Naive thymus-derived CD4-positive, alpha-beta T cell (primary cell): ENCODE measurements at regions of chr6 and their contacts with region 1.

Region 1: DNA sequence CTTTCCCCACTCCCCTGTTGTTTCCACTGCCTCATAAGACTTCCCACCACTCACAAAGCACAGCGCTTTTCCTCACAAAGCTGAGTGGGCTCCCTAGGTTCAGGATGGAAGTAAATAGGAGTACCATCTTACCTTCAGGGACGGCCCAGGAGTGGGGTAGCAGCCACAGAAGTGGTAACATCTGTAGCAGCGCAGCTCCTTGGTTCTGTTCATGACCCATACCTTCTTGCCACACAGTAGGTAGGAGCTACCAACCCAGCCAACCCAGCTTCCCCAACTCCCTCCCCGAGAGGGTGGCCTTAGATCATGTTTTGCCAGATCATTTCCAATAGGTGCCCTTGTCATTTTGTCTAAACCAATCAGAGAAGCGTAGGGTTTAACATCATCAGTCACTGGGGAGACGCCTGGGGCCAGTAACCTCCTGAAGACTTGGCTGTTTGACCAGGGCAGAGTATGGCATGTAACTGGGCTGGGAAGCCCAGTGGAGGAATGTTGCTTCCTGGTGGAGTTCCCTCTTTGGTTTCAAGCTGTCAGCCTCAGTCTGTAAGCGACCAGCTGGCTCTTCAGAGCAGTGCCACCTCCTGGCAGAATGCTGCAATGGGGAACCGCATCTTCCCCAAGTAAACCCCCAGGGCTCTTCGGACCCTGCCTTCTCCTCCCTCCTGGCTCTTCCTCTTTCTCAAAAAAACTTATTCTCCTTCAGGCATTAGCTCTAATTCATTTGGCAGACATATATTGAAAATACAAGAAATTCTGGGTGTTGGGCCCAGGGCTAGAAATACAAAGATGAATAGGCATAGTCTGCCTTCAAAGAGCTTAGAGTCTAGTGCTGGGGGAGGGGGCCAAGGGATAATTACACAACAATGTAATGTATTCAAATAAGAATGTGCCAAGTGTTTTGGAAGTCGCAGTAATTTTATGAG is at the start of gene HLA-DMA:
- DNase-seq: peak; percentile 52 to 89 (median 83)
- ATAC-seq: peak; percentile 96
- H3K4me3 ChIP-seq: peak within 1 kb of the TSS; percentile 64
- H3K4me3 Mint-ChIP-seq: peak within 1 kb of the TSS; percentile 75 to 86 (median 82)
- H3K27ac ChIP-seq: peak within 1 kb of the TSS; percentile 63
- H3K27ac Mint-ChIP-seq: peak within 1 kb of the TSS; percentile 61 to 94 (median 88)
- H3K4me1 ChIP-seq: peaks cover 21 to 23% of the 10 kb centered on the region in 2 donors
- H3K4me1 Mint-ChIP-seq: peaks cover 44 to 57% (median 48%) of the 10 kb centered on the region in 7 donors
- H3K27me3 ChIP-seq: no peaks in the 10 kb centered on the region
- H3K27me3 Mint-ChIP-seq: no peaks in the 10 kb centered on the region
- total RNA-seq, gene HLA-DMA: 12.5 to 120 (median 29.6) TPM

Region 2: GRCh38 chr6:32838114-32838958 is 114.7 kb before region 1 on chr6 and contains the start of gene TAP2:
- CTCF ChIA-PET with region 1: interaction called, 12 read pairs
- POLR2A ChIA-PET with region 1: interaction called, 12 read pairs
- intact Hi-C with region 1: no loop called
- DNase-seq: peak; percentile 93 to 100 (median 97)
- ATAC-seq: peak; percentile 97
- H3K4me3 ChIP-seq: peak within 1 kb of the TSS; percentile 87
- H3K4me3 Mint-ChIP-seq: peak within 1 kb of the TSS; percentile 85 to 98 (median 93)
- H3K27ac ChIP-seq: peak within 1 kb of the TSS; percentile 97
- H3K27ac Mint-ChIP-seq: peak within 1 kb of the TSS; percentile 89 to 100 (median 99)
- H3K4me1 ChIP-seq: peaks cover 52 to 64% of the 10 kb centered on the region in 2 donors
- H3K4me1 Mint-ChIP-seq: peaks cover 71 to 92% (median 84%) of the 10 kb centered on the region in 7 donors
- H3K27me3 ChIP-seq: no peaks in the 10 kb centered on the region
- H3K27me3 Mint-ChIP-seq: no peaks in the 10 kb centered on the region
- total RNA-seq, gene TAP2: 84.3 to 243 (median 117) TPM

Region 3: GRCh38 chr6:32853541-32854375 is 99.3 kb before region 1 on chr6 and contains the starts of genes PSMB9 and TAP1:
- CTCF ChIA-PET with region 1: interaction called, 10 read pairs
- POLR2A ChIA-PET with region 1: interaction called, 6 read pairs
- intact Hi-C with region 1: no loop called
- DNase-seq: peak; percentile 92 to 97 (median 94)
- ATAC-seq: peak; percentile 92
- H3K4me3 ChIP-seq: peak within 1 kb of the TSS; percentile 91
- H3K4me3 Mint-ChIP-seq: peak within 1 kb of the TSS; percentile 96 to 100 (median 100)
- H3K27ac ChIP-seq: peak within 1 kb of the TSS; percentile 100
- H3K27ac Mint-ChIP-seq: peak within 1 kb of the TSS; percentile 97 to 100 (median 100)
- H3K4me1 ChIP-seq: peaks cover 45 to 57% of the 10 kb centered on the region in 2 donors
- H3K4me1 Mint-ChIP-seq: peaks cover 61 to 80% (median 72%) of the 10 kb centered on the region in 7 donors
- H3K27me3 ChIP-seq: no peaks in the 10 kb centered on the region
- H3K27me3 Mint-ChIP-seq: no peaks in the 10 kb centered on the region
- total RNA-seq, gene PSMB9: 70.3 to 452 (median 90.5) TPM
- total RNA-seq, gene TAP1: 92.1 to 500 (median 103) TPM

Region 4: DNA sequence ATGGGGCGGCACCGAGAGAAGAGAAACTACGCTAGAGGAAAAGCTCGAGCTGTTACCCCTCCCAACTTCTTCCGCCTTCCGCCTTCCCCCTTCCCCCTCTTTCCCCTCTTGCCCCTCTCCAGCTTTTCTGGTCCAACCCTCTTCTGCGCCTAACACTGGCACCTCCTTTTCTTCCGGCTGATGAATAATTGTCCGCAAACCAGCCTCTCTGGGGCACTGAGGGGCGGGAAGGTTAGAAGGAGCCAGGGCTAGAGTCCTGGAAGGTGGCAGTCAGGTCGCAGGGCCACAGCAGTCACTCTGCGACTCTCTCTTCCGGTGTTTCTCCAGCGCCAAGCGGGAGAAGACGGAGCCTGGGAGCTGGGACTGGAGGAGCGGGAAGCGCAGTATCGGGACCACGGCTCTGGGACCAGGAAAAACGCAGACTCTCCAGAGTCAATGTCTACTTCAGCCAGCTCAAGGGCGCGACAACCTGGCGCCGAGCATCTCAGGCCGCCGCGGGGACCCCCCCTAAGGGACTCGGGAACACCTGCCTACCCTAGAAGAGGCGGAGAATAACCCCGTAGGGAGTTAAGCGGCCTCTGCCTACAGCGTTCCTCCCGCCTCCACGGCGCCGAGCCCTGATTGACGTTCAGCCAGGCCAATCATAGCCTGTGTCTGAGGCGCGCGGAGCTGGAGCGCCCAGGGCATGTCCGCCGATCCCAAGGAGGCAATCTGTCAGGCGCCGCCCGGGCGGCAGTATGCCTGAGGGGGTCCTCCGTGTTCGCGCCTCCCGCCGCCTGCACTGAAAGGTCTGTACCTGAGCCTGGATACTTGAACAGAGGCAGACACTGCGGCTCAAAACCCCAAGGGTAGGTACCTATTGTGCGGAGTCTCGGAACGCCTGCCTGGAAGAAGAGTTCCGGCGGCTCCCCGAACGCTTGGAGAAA is 58.7 kb before region 1 on chr6:
- CTCF ChIA-PET with region 1: interaction called, 7 read pairs
- POLR2A ChIA-PET with region 1: interaction called, 6 read pairs
- intact Hi-C with region 1: loop called (anchors 1 to 2 kb)
- DNase-seq: peak; percentile 89 to 98 (median 94)
- ATAC-seq: peak; percentile 99
- H3K4me3 ChIP-seq: peak overlapping the region; percentile 81
- H3K4me3 Mint-ChIP-seq: peak overlapping the region; percentile 91 to 100 (median 99)
- H3K27ac ChIP-seq: peak overlapping the region; percentile 78
- H3K27ac Mint-ChIP-seq: peak overlapping the region; percentile 78 to 97 (median 94)
- H3K4me1 ChIP-seq: peaks cover 12 to 13% of the 10 kb centered on the region in 2 donors
- H3K4me1 Mint-ChIP-seq: peaks cover 30 to 43% (median 36%) of the 10 kb centered on the region in 7 donors
- H3K27me3 ChIP-seq: no peaks in the 10 kb centered on the region
- H3K27me3 Mint-ChIP-seq: peaks cover 0 to 4% (median 0%) of the 10 kb centered on the region in 5 donors

Region 5: DNA sequence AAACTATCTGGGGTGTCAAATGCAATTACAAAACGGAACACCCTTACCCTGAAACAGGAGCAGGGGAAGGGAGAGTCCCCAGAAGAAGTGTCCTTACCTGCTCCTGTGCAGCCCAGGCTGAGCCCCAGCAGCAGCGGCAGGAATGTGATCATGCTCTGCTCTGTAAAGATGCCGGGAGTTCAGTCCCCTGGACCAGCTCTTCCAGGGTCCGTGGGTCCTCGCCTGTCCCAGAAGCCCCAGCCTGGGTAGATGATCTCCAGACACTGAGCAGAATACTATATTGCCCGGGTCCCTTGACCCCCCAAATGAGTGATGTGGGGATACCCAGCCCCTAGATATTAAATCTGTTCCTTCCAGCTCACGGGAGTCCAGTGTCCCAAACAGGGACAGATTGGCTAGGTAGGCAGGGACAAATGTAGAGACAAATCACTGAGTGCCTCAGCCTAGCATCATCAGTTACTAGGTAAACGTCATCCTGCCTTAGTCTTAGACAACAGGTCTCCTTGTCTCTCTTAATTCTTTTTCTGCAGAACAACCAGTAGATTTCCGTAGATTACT is 12.3 kb before region 1 on chr6 and contains the start of gene HLA-DMB:
- CTCF ChIA-PET with region 1: interaction called, 411 read pairs
- POLR2A ChIA-PET with region 1: interaction called, 39 read pairs
- intact Hi-C with region 1: loop called (anchors 1 kb)
- DNase-seq: peak in 7 of 9 donors; percentile 64 to 80 (median 74)
- ATAC-seq: peak; percentile 86
- H3K4me3 ChIP-seq: peak within 1 kb of the TSS; percentile 66
- H3K4me3 Mint-ChIP-seq: peak within 1 kb of the TSS; percentile 85 to 97 (median 94)
- H3K27ac ChIP-seq: peak within 1 kb of the TSS; percentile 75
- H3K27ac Mint-ChIP-seq: peak within 1 kb of the TSS; percentile 95 to 98 (median 96)
- H3K4me1 ChIP-seq: peaks cover 50 to 55% of the 10 kb centered on the region in 2 donors
- H3K4me1 Mint-ChIP-seq: peaks cover 55 to 67% (median 62%) of the 10 kb centered on the region in 7 donors
- H3K27me3 ChIP-seq: no peaks in the 10 kb centered on the region
- H3K27me3 Mint-ChIP-seq: peaks cover 0 to 7% (median 0%) of the 10 kb centered on the region in 5 donors
- total RNA-seq, gene HLA-DMB: 7.8 to 82.5 (median 9.1) TPM

Region 6: DNA sequence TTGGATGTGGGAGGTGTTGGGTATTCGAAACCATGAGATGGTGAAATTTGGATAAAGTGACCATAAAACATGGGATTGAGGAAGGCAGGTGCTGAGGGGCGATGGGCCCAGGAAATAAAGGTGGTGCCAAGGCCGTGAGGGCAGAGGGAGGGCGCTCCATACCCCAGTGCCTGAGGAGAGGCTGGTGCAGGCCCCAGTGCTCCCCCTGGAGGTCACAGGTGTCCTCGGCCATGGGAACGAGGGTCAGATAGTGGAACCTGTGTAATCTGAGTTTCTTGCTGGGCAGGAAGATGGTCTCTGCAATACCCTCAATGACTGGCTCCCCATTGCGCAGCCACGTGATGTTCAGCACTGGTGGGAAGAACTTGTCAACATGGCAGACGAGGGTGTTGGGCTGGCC is 138.9 kb after region 1 on chr6:
- CTCF ChIA-PET with region 1: no interaction called
- POLR2A ChIA-PET with region 1: no interaction called
- intact Hi-C with region 1: no loop called
- DNase-seq: peak in 8 of 9 donors; percentile 13 to 55 (median 41)
- ATAC-seq: peak; percentile 91
- H3K4me3 ChIP-seq: no peak overlapping the region
- H3K4me3 Mint-ChIP-seq: no peak overlapping the region
- H3K27ac ChIP-seq: no peak overlapping the region
- H3K27ac Mint-ChIP-seq: no peak overlapping the region
- H3K4me1 ChIP-seq: no peaks in the 10 kb centered on the region
- H3K4me1 Mint-ChIP-seq: peaks cover 0 to 5% (median 0%) of the 10 kb centered on the region in 7 donors
- H3K27me3 ChIP-seq: no peaks in the 10 kb centered on the region
- H3K27me3 Mint-ChIP-seq: peaks cover 12 to 32% (median 18%) of the 10 kb centered on the region in 5 donors